K562 (cell line): ENCODE measurements at regions of chr22 and their contacts with region 1.

Region 1: DNA sequence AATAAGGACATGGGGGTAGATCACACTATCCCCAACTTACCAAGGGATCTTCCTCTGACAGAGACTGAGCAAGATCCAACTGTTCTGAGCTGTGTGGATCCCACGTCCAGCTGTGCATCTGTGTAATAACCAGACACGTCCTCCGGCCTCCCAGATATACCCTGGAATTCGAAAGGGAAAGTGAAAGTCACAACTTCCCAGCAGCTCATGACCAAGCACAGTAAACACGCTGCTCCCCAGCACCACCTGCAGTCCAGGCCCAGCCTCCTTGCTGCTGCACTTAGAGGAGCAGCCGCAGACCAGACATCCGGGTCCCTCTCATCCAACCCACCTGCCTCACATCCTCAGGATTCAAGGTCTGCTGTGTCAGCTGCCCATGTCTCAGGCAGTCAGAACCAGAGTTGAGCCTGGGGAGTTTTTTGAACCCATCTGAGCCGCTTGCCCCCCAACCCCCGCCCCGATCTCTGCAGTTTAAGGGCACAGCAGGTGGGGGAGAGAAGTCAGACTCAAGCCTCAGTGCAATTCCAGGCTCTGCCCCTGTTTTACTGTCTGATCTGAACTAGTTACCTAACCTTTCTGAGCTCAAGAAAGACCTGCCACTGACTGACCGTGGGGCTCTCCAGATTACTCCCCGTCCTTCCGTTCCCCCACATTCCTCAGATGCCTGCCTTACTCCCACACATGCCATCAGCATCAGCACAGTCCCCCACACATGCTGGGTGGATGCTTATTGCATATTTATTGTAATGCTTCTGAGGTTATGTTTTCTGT is at the start of gene APOL2:
- DNase-seq: peak; percentile 77 to 91 (median 81)
- ATAC-seq: peak; percentile 99
- H3K4me3 ChIP-seq: peak within 1 kb of the TSS; percentile 59
- H3K27ac ChIP-seq: peak within 1 kb of the TSS; percentile 87
- H3K4me1 ChIP-seq: peaks cover 4 to 6% of the 10 kb centered on the region in 2 experiments; a peak in 4 of 5 replicates
- H3K27me3 ChIP-seq: no peaks in the 10 kb centered on the region
- CTCF ChIP-seq: peak; percentile 69 to 73 (median 71)
- EP300 ChIP-seq: peak; percentile 30; the same call in 1 of the 2 replicates
- POLR2A ChIP-seq: peak; percentile 48; the same call in 1 of the 2 replicates
- RAD21 ChIP-seq: peak in 1 of 2 experiments; percentile 49; a peak in 2 of 4 replicates
- polyA plus RNA-seq, gene APOL2: 2.7 to 6.8 TPM

Region 2: GRCh38 chr22:35863432-35863831 is 376.2 kb before region 1 on chr22:
- CTCF ChIA-PET with region 1: no interaction called
- POLR2A ChIA-PET with region 1: no interaction called
- in situ Hi-C with region 1: no loop called
- intact Hi-C with region 1: no loop called
- DNase-seq: no peak
- ATAC-seq: no peak
- H3K4me3 ChIP-seq: no peak overlapping the region
- H3K27ac ChIP-seq: no peak overlapping the region
- H3K4me1 ChIP-seq: no peaks in the 10 kb centered on the region
- H3K27me3 ChIP-seq: no peaks in the 10 kb centered on the region
- CTCF ChIP-seq: no peak
- EP300 ChIP-seq: no peak
- POLR2A ChIP-seq: no peak
- RAD21 ChIP-seq: no peak

Region 3: DNA sequence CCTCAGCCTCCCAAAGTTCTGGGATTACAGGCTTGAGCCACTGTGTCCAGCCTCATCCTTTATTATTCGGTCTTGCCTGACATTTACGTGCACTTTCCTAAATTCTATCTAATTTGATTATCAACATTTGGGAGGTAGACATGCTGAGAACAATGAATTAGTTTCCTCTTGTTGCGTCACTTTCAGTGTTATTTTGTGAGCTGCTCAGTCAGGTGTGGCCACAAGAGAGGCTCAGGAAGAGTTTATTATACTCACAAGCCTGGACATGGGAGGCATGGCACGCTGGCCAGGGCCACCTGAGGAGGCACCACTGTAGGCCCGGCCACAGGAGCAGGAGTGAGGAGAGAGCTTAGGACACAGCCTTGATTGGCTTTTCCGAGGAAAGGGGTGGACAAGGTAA is 151.3 kb before region 1 on chr22:
- CTCF ChIA-PET with region 1: no interaction called
- POLR2A ChIA-PET with region 1: no interaction called
- in situ Hi-C with region 1: no loop called
- intact Hi-C with region 1: no loop called
- DNase-seq: no peak
- ATAC-seq: peak; percentile 38; the same call in 1 of the 3 replicates
- H3K4me3 ChIP-seq: no peak overlapping the region
- H3K27ac ChIP-seq: no peak overlapping the region
- H3K4me1 ChIP-seq: no peaks in the 10 kb centered on the region; a peak in 2 of 5 replicates
- H3K27me3 ChIP-seq: no peaks in the 10 kb centered on the region
- CTCF ChIP-seq: no peak
- EP300 ChIP-seq: no peak
- POLR2A ChIP-seq: no peak
- RAD21 ChIP-seq: no peak

Region 4: GRCh38 chr22:36252754-36253517 is 13.3 kb after region 1 on chr22 and contains the start of gene APOL1:
- CTCF ChIA-PET with region 1: no interaction called
- POLR2A ChIA-PET with region 1: interaction called, 15 read pairs
- in situ Hi-C with region 1: no loop called
- intact Hi-C with region 1: no loop called
- DNase-seq: peak; percentile 23 to 75 (median 44)
- ATAC-seq: peak; percentile 79
- H3K4me3 ChIP-seq: peak within 1 kb of the TSS; percentile 36
- H3K27ac ChIP-seq: peak within 1 kb of the TSS; percentile 61
- H3K4me1 ChIP-seq: peaks cover 22 to 31% of the 10 kb centered on the region in 2 experiments
- H3K27me3 ChIP-seq: no peaks in the 10 kb centered on the region
- CTCF ChIP-seq: no peak
- EP300 ChIP-seq: no peak; the same call in 1 of the 2 replicates
- POLR2A ChIP-seq: peak; percentile 54
- RAD21 ChIP-seq: no peak
- polyA plus RNA-seq, gene APOL1: 2.5 to 4.2 TPM

Region 5: DNA sequence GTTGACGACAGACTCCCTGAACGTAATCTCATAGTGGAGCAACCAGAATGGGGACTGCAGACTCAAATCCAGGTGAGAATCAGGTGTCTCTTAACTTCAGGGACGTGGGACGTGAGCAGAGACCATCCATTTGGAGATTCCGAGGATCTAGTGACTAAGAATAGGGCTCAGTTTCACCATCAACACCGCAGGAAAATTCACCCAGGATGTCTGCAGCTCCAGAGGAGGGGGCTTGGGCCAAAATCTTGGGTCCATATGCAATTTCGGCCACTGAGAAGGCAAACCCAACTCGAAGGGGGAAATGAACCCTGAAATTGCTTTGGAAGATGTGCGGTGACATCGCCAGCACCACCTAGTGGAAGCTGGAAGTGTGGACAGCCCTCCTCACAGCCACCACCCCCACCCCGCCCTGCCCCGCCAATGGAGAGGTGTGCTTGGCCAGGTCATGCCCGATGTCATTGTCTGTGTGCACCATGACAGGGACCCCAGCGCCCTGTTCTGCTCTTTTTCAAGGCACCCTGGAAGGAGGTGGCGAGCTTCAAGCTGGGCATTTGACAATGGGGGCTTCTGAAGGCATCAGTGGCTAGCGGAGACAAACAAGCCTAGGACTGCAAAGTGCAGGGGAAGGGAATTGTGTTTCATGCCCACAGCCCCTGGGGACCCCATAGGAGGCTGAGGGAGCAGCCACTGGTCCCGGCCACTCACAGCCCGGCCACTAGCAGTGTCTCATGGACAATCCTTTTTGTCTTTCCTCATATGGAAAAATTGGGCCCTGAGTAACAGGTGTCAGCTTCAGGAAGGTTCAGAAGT is 38.1 kb after region 1 on chr22:
- CTCF ChIA-PET with region 1: no interaction called
- POLR2A ChIA-PET with region 1: interaction called, 3 read pairs
- in situ Hi-C with region 1: no loop called
- intact Hi-C with region 1: loop called (anchors 5 kb)
- DNase-seq: peak; percentile 66 to 73 (median 67)
- ATAC-seq: peak; percentile 96
- H3K4me3 ChIP-seq: no peak overlapping the region
- H3K27ac ChIP-seq: no peak overlapping the region
- H3K4me1 ChIP-seq: peaks cover 0 to 4% of the 10 kb centered on the region in 2 experiments; a peak in 3 of 5 replicates
- H3K27me3 ChIP-seq: no peaks in the 10 kb centered on the region
- CTCF ChIP-seq: peak; percentile 70 to 79 (median 71)
- EP300 ChIP-seq: no peak
- POLR2A ChIP-seq: no peak
- RAD21 ChIP-seq: peak; percentile 24 to 67